ENCODE measurements at regions of chr6 and their contacts with region 1.

Region 1: GRCh38 chr6:29752451-29753308 is 29.4 kb downstream of the HLA-F start:
- DNase-seq: peak; percentile 79 to 89 (median 87)
- H3K4me3 ChIP-seq: peak overlapping the region; percentile 62 to 98 (median 86)
- H3K4me3 Mint-ChIP-seq: peak overlapping the region; percentile 97 to 98
- H3K27ac ChIP-seq: peak overlapping the region; percentile 82 to 87
- H3K27ac Mint-ChIP-seq: peak overlapping the region; percentile 78 to 96 (median 94)
- H3K4me1 ChIP-seq: peaks cover 23 to 38% of the 10 kb centered on the region in 2 donors
- H3K4me1 Mint-ChIP-seq: peaks cover 38% of the 10 kb centered on the region
- H3K27me3 ChIP-seq: peaks cover 0 to 6% of the 10 kb centered on the region in 2 donors
- H3K27me3 Mint-ChIP-seq: peaks cover 4 to 9% (median 8%) of the 10 kb centered on the region in 3 donors
- CTCF ChIP-seq: peak; percentile 98

Region 2: GRCh38 chr6:29649701-29650673 is 102.7 kb before region 1 on chr6:
- intact Hi-C with region 1: loop called in 1 of 2 experiments (anchors 5 kb)
- DNase-seq: peak; percentile 97 to 98 (median 98)
- H3K4me3 ChIP-seq: peak overlapping the region; percentile 64 to 84 (median 68)
- H3K4me3 Mint-ChIP-seq: peak overlapping the region; percentile 96 to 99
- H3K27ac ChIP-seq: peak overlapping the region; percentile 93 to 98
- H3K27ac Mint-ChIP-seq: peak overlapping the region; percentile 99 to 100 (median 100)
- H3K4me1 ChIP-seq: peaks cover 12 to 14% of the 10 kb centered on the region in 2 donors
- H3K4me1 Mint-ChIP-seq: peaks cover 9% of the 10 kb centered on the region
- H3K27me3 ChIP-seq: peaks cover 0 to 7% of the 10 kb centered on the region in 2 donors
- H3K27me3 Mint-ChIP-seq: peaks cover 0 to 5% (median 2%) of the 10 kb centered on the region in 3 donors
- CTCF ChIP-seq: peak; percentile 97

Region 3: DNA sequence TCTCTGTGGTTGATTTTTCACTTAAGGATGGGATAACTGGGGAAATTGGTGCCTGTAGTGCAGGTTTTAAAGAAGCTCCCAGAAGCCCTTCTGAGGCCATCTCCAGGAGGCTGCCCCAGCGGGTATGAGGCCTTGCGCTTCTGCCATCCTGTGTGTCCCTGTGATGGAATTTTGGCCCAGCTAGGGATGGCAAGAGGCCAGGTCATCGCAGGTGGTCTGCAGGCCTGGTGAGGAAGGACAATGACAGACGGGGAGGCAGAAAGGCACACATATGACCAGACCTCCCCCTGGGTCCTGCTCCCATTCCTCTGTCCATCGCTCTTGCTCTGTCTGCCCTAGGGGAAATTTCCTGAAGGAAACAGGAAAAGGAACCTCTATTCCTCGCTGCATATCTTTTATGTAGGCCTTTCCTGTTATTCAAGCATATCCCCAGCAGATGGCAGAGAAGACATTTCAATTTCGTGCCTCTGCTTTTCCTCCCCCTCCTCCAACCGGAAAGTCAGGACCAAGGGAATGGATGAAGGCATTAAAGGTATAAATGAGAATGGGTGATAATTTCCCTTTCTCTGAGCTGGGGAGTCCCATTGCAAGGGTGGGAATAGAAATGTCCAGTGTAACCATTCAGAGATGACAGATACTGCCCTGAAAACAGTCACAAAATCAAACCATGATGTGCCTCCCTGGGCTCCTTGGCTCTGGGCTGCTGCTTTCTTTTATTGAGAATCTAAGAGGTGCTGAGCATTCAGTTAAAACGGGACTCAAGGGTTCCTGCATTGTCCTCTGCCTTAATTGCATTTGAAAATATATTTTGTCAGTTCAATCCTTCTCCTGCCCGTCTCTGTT is 47.1 kb before region 1 on chr6:
- intact Hi-C with region 1: loop called (anchors 5 kb)
- DNase-seq: peak in 2 of 3 donors; percentile 48 to 54
- H3K4me3 ChIP-seq: no peak overlapping the region
- H3K4me3 Mint-ChIP-seq: no peak overlapping the region
- H3K27ac ChIP-seq: no peak overlapping the region
- H3K27ac Mint-ChIP-seq: no peak overlapping the region
- H3K4me1 ChIP-seq: peaks cover 10% of the 10 kb centered on the region in 2 donors
- H3K4me1 Mint-ChIP-seq: peaks cover 12% of the 10 kb centered on the region
- H3K27me3 ChIP-seq: peaks cover 11 to 31% of the 10 kb centered on the region in 2 donors
- H3K27me3 Mint-ChIP-seq: peaks cover 22 to 47% (median 46%) of the 10 kb centered on the region in 3 donors
- CTCF ChIP-seq: peak; percentile 77

Region 4: DNA sequence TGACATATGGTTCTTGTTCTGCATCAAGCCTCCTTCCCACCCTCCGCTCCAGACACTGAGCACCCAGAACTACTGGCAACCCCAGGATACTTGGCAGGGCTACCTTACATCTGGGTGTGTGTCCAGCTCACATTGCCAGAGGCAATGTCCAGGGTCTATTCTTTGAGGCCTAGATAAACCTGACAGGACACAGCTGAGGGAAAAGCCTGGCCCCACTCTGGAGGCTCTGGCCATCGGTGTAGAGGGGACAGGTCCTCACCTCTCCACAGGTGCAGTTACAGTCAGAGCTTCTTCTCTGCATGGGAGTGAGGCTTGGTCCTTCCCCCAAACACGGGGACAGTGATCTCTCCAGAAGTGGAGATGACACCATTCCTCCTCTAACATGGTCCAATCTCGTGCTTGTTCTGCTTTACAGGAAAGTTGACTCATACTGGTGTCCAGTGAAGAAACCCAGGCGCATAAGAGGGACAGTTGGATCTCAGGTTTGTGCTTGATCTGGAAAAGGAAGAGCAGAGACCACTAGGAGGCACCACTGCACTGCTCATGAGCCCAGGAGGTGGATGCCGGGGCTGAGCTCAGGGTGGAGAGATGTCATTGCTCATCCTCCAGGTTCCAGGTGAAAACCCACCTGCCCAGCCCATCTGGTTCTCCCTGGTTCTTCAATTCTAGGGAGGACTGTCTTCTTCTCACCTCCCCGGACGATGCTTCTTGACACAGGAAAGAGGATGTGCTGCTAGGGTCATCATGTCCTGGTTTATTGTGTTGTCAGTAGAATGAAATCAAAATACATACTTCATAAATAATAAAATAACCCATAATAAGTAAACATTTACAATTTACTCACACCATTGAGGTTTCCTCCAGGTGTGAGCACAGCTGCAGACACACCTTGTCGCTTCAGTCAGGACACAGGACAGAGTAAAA is 14.7 kb before region 1 on chr6:
- intact Hi-C with region 1: loop called in 1 of 2 experiments (anchors 2 kb)
- DNase-seq: peak; percentile 75 to 90 (median 79)
- H3K4me3 ChIP-seq: no peak overlapping the region
- H3K4me3 Mint-ChIP-seq: no peak overlapping the region
- H3K27ac ChIP-seq: no peak overlapping the region
- H3K27ac Mint-ChIP-seq: peak overlapping the region in 2 of 7 donors; percentile 48 to 53
- H3K4me1 ChIP-seq: no peaks in the 10 kb centered on the region
- H3K4me1 Mint-ChIP-seq: peaks cover 15% of the 10 kb centered on the region
- H3K27me3 ChIP-seq: no peaks in the 10 kb centered on the region
- H3K27me3 Mint-ChIP-seq: peaks cover 0 to 3% (median 1%) of the 10 kb centered on the region in 3 donors
- CTCF ChIP-seq: peak; percentile 83

Measured in CD14-positive monocyte (primary cell).